Activated CD4-positive, alpha-beta T cell treated with anti-CD3 and anti-CD28 coated beads, Interleukin-2, amount 10 ng/mL, durations not matched to agents 24 days and 14 days (primary cell): ENCODE measurements at regions of chr7 and their contacts with region 1.

Region 1: GRCh38 chr7:155506854-155507337 is 39.5 kb downstream of the CNPY1 start:
- DNase-seq: no peak
- H3K4me3 Mint-ChIP-seq: no peak overlapping the region
- H3K27ac Mint-ChIP-seq: peak overlapping the region; percentile 53
- H3K4me1 Mint-ChIP-seq: peaks cover 15% of the 10 kb centered on the region
- H3K27me3 Mint-ChIP-seq: peaks cover 88% of the 10 kb centered on the region

Region 2: DNA sequence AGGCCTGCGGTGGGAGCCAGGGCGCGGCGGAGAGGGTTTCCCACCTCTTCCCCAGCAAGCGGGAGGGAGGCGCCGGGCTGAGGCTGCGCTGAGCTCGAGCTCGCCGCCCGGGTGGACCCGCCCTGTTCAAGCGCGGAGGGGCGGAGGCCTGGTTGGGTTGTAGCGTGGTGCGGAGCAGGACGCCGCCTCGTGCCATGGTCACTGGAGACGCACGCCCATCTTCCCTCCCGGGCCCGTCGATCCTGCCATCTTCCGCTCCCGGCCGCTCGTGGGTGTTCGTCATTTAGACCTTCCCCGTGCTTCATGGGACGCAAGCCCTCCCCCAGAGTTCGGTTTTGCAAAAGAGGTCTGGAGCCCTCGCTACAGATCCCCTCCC is 58.3 kb before region 1 on chr7:
- intact Hi-C with region 1: loop called (anchors 2 kb)
- DNase-seq: no peak
- H3K4me3 Mint-ChIP-seq: no peak overlapping the region
- H3K27ac Mint-ChIP-seq: no peak overlapping the region
- H3K4me1 Mint-ChIP-seq: no peaks in the 10 kb centered on the region
- H3K27me3 Mint-ChIP-seq: peaks cover 68% of the 10 kb centered on the region

Region 3: GRCh38 chr7:155466814-155467733 is 39.8 kb before region 1 on chr7:
- intact Hi-C with region 1: loop called (anchors 1 kb)
- DNase-seq: peak; percentile 77
- H3K4me3 Mint-ChIP-seq: no peak overlapping the region
- H3K27ac Mint-ChIP-seq: no peak overlapping the region
- H3K4me1 Mint-ChIP-seq: peaks cover 7% of the 10 kb centered on the region
- H3K27me3 Mint-ChIP-seq: peaks cover 84% of the 10 kb centered on the region

Region 4: DNA sequence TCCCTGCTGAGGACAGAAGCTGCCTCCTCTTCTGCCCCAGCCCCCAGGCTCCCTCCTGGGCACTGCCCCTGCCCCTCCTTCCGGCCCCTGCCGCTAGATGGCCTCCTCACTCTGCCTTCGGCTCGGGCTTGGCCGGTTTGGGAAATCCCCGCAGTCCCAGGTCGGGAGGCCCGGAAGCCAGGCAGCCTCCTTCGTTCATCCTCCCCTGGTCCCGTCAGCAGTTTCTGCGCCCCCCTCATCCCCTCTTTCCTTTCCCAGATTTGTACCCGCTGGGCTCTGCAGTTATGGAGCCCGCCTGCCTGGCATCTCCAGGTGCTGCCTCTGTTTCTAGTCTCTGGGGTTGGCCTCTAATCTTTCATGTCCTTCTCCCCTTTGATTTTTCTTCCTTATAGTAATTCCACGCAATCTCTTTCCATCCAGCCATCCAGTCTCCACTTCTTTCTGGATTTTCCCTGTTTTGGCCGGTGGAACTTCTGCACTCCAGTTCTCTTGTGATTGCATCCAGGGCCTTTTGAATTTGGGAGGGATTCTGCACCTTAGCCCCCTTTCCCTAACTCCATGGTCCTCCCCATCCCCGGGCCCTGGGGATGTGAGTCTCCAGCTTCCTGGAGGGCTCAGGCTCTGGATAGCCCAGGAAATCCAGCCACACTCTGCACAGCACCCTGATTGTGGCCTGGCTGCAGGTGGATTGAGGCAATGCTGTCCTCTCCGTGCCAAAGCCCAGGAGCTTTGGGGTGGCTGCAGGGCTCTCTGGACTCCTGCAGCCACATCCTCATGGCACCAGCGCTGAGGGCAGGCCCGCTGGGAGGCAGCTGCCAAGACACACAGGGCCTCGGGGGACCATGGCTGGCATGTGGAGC is 308.7 kb after region 1 on chr7:
- intact Hi-C with region 1: loop called (anchors 2 kb)
- DNase-seq: peak; percentile 93
- H3K4me3 Mint-ChIP-seq: peak overlapping the region; percentile 34
- H3K27ac Mint-ChIP-seq: no peak overlapping the region
- H3K4me1 Mint-ChIP-seq: peaks cover 15% of the 10 kb centered on the region
- H3K27me3 Mint-ChIP-seq: peaks cover 42% of the 10 kb centered on the region